Activated CD4-positive, alpha-beta memory T cell treated with anti-CD3 and anti-CD28 coated beads for 36 hours (primary cell): ENCODE measurements at regions of chr6 and their contacts with region 1.

Region 1: GRCh38 chr6:137736048-137736818 is 130.8 kb upstream of the TNFAIP3 start:
- DNase-seq: peak; percentile 43
- H3K4me3 Mint-ChIP-seq: no peak overlapping the region
- H3K27ac Mint-ChIP-seq: peak overlapping the region; percentile 25
- H3K4me1 Mint-ChIP-seq: peaks cover 22% of the 10 kb centered on the region
- H3K27me3 Mint-ChIP-seq: peaks cover 2% of the 10 kb centered on the region

Region 2: GRCh38 chr6:137610702-137611101 is 125.5 kb before region 1 on chr6:
- CTCF ChIA-PET with region 1: no interaction called
- POLR2A ChIA-PET with region 1: no interaction called
- intact Hi-C with region 1: no loop called
- DNase-seq: no peak
- H3K4me3 Mint-ChIP-seq: no peak overlapping the region
- H3K27ac Mint-ChIP-seq: no peak overlapping the region
- H3K4me1 Mint-ChIP-seq: no peaks in the 10 kb centered on the region
- H3K27me3 Mint-ChIP-seq: peaks cover 10% of the 10 kb centered on the region

Region 3: DNA sequence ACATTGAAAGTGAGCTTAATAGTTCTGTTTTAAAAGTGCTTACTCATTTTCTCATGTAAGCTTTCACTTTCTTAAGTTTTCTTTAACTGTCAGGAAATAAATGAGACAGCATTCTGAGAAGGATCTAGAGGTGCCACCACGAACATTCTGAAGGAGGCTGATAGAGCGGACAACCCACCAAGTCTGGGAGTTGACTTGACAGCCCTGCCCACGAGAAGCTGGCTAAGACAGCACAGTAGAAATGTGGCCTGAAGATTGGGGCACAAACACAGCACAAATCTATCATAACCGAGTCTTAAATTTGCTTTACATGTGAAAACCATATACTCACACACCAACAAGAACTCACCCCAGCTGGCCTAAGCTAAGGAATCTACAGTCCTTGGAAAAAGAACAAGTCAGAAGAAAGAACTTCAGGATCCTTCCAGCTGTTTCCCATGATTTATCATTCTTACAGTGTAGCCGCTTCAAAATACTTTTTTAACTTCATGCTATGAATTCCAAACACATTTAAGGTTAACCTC is 13.4 kb before region 1 on chr6:
- CTCF ChIA-PET with region 1: no interaction called
- POLR2A ChIA-PET with region 1: no interaction called
- intact Hi-C with region 1: loop called (anchors 2 kb)
- DNase-seq: peak; percentile 56
- H3K4me3 Mint-ChIP-seq: peak overlapping the region; percentile 3
- H3K27ac Mint-ChIP-seq: peak overlapping the region; percentile 68
- H3K4me1 Mint-ChIP-seq: peaks cover 16% of the 10 kb centered on the region
- H3K27me3 Mint-ChIP-seq: peaks cover 6% of the 10 kb centered on the region